ENCODE measurements at regions of chr11 and their contacts with region 1.

Region 1: GRCh38 chr11:111938687-111939160 is 1.6 kb downstream of the DIXDC1 start:
- DNase-seq: no peak
- ATAC-seq: no peak
- H3K4me3 ChIP-seq: no peak overlapping the region
- H3K27ac ChIP-seq: peak overlapping the region in 1 of 3 donors; percentile 92
- H3K4me1 ChIP-seq: peaks cover 0 to 51% (median 14%) of the 10 kb centered on the region in 4 donors
- H3K27me3 ChIP-seq: no peaks in the 10 kb centered on the region
- CTCF ChIP-seq: no peak
- POLR2A ChIP-seq: no peak

Region 2: DNA sequence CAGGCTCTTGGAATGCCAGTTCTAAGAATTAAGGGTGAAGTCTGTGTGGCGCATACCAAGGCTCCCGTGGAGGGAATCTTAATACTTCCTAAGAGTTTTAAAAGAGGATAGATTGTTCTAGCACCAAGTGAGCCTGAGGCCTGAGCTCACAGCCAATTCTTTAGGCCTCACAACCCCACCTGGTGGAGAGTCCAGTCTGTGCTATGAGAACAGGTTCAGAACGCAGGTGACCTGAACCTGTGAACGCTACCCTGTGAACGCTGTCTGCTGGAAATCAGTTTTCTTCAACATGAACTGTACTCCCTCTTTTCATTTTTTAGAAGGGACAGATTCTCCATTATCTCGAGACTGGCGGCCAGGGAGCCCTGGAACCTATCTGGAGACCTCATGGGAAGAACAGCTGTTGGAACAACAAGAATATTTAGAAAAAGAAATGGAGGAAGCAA is 43.3 kb after region 1 on chr11:
- intact Hi-C with region 1: loop called in 1 of 2 experiments (anchors 10 kb)
- DNase-seq: peak; percentile 73 to 88 (median 81)
- ATAC-seq: peak; percentile 81 to 90 (median 85)
- H3K4me3 ChIP-seq: peak overlapping the region; percentile 26 to 52 (median 39)
- H3K27ac ChIP-seq: peak overlapping the region; percentile 86 to 96 (median 93)
- H3K4me1 ChIP-seq: peaks cover 0 to 37% (median 5%) of the 10 kb centered on the region in 4 donors
- H3K27me3 ChIP-seq: no peaks in the 10 kb centered on the region
- CTCF ChIP-seq: peak; percentile 69 to 81 (median 81)
- POLR2A ChIP-seq: peak; percentile 51

Measured in right lobe of liver (tissue), 6 donors.